Dorsolateral prefrontal cortex (tissue), 120 donors: ENCODE measurements at regions of chr11 and their contacts with region 1.

Region 1: GRCh38 chr11:59207988-59208451 is 4.7 kb downstream of the MPEG1 start:
- DNase-seq: peak in 4 of 10 donors; percentile 25 to 58 (median 47)
- H3K4me3 ChIP-seq: peak overlapping the region in 4 of 59 donors; percentile 3 to 17 (median 9)
- H3K27ac ChIP-seq: peak overlapping the region in 31 of 59 donors; percentile 3 to 78 (median 57)
- H3K27me3 ChIP-seq: no peaks in the 10 kb centered on the region
- CTCF ChIP-seq: peak; percentile 56 to 93 (median 80)

Region 2: GRCh38 chr11:59106363-59107336 is 101.4 kb before region 1 on chr11 and contains the start of gene FAM111B:
- intact Hi-C with region 1: loop called in 1 of 2 experiments (anchors 5 kb)
- DNase-seq: peak; percentile 36 to 89 (median 82)
- H3K4me3 ChIP-seq: peak within 1 kb of the TSS; percentile 31 to 82 (median 65)
- H3K27ac ChIP-seq: no peak within 1 kb of the TSS
- H3K27me3 ChIP-seq: peaks cover 0 to 22% (median 3%) of the 10 kb centered on the region in 45 donors
- CTCF ChIP-seq: peak in 19 of 56 donors; percentile 5 to 52 (median 18)
- total RNA-seq, gene FAM111B: 0.14 to 2.1 (median 0.49) TPM in 21 of 120 experiments, not detected in the others

Region 3: DNA sequence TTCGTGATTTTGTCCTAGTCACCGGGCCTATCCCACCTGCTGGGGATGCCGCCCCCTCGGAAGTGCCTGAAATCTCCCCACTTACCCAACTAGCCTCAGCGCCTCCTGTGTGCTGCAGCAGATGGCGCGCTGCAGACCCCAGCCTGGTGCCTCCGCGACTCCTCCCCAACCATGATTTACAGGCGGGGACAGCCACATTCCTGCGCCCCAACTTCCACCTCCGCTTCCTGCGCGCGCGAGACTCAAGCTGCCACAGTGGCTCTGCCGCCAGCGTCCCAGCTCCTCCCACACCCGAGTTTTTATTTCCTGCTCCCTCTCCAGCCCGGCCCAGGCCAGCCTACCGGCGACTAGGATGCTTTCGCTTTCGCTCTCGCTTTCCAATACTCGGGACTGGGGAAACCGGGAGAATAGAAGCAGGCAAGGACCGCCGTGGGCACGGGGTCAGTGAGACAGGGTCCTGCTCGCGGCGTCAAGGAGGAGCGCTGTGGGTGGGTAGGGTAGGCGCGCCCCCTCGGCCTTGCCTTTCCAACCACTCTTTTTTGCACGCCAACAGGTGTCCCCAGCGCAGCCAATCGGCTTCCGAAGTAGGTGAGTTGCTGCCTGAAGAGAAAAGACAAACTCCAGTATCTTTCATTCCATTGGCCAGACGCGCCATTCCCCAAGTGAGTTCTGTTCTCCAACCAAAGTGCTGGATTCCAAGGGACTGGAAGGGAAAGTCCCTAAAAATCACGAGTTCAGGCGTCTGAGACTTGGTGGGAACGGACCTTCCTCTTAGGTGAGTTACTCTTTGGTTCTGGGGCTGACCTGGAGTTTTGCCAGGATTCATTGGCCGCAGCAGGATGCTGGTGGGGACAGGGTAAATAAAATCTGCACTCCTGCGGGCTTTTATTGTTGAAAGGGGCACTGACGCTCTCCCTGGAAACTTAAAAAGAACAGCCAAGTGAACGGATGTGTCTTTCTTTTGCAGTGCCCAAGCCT is 65.2 kb before region 1 on chr11 and contains the start of gene FAM111A:
- intact Hi-C with region 1: loop called in 1 of 2 experiments (anchors 10 kb)
- DNase-seq: peak; percentile 53 to 86 (median 75)
- H3K4me3 ChIP-seq: peak within 1 kb of the TSS; percentile 62 to 98 (median 83)
- H3K27ac ChIP-seq: peak within 1 kb of the TSS in 56 of 59 donors; percentile 12 to 94 (median 80)
- H3K27me3 ChIP-seq: no peaks in the 10 kb centered on the region
- CTCF ChIP-seq: peak in 48 of 56 donors; percentile 7 to 55 (median 34)
- total RNA-seq, gene FAM111A: 2.6 to 22.5 (median 9.5) TPM

Region 4: GRCh38 chr11:59171508-59172322 is 36.3 kb before region 1 on chr11 and contains the start of gene DTX4:
- intact Hi-C with region 1: loop called (anchors 1 kb)
- DNase-seq: peak; percentile 91 to 96 (median 94)
- H3K4me3 ChIP-seq: peak within 1 kb of the TSS; percentile 56 to 92 (median 77)
- H3K27ac ChIP-seq: peak within 1 kb of the TSS; percentile 76 to 99 (median 95)
- H3K27me3 ChIP-seq: no peaks in the 10 kb centered on the region
- CTCF ChIP-seq: peak in 55 of 56 donors; percentile 61 to 99 (median 91)
- total RNA-seq, gene DTX4: 21.4 to 93.9 (median 32.3) TPM

Region 5: DNA sequence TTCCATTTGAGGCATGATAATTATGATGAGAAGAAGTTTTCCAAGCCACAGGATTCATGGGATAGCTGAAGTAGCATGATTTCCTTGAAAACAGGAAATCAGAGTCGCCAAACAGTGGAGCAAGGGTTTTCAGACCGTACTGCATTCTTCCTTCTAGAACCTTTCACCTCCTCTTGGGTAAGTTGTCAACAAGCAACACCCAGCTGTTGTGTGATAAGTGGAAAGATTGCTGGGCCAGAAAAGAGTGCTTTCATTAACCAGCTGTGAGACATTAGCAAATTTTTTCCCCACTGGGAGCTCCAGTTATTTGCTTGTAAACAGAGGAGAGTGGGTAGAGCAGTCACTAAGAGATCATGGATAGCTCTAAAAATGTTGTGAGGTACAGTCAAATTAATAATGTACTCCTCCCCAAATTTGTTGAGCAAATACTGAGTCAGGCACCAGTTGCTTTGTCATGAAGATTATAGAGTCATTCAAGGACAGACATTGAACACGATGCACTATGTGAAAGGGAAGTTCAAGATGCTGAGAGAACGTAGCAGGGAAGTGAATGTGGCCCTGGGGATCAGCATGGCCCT is 16.4 kb after region 1 on chr11:
- intact Hi-C with region 1: no loop called
- DNase-seq: no peak
- H3K4me3 ChIP-seq: no peak overlapping the region
- H3K27ac ChIP-seq: no peak overlapping the region
- H3K27me3 ChIP-seq: peaks cover 0 to 2% (median 0%) of the 10 kb centered on the region in 45 donors
- CTCF ChIP-seq: no peak

Region 6: GRCh38 chr11:59283825-59284772 is 76.1 kb after region 1 on chr11:
- intact Hi-C with region 1: loop called (anchors 5 kb)
- DNase-seq: peak in 1 of 10 donors; percentile 47
- H3K4me3 ChIP-seq: no peak overlapping the region
- H3K27ac ChIP-seq: no peak overlapping the region
- H3K27me3 ChIP-seq: peaks cover 0 to 6% (median 0%) of the 10 kb centered on the region in 45 donors
- CTCF ChIP-seq: peak; percentile 65 to 88 (median 78)